SK-N-SH (cell line): ENCODE measurements at regions of chr11 and their contacts with region 1.

Region 1: DNA sequence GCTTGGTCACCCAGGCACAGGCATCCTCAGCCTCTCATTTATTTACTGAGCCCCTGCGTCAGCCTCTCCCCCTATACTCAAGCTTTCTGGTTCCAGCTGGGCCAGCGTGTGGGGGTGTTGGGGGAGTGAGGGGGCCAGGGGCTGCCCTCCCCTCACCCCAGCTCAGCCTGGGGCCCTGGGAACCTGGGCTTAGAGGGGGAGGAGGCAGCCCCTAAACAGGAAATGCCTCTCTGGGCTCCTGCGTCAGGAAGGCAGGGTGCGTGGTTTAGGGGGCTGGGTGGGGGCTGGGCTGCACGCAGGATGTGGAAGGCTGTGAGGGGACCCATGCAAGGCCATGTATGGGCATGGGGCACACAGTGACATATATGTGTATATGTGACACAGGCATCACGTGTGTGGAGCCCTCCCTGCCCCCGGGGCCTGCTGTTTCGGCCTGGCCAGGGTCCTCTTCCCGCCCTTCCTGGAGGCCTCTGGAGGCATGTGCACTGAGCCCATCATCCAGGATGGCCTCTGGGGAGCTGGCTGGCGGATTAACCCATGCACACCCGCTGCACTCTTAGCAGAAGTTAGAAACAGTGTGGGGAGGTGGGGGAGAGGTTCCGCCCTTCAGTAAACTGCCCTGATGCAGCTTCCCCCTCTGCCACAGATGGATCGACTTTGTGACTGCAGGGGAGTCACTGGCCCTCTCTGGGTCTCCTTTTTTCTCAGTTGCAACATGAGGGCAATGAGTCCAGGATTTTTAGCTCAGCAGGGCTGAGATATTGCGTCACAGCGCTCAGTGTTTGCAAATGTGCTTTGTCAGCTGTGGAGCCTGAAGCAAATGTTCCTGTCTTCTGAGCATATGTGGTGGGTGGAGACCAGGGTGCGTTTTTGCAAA is 1.1 kb upstream of the CD248 start:
- DNase-seq: peak; percentile 69
- H3K4me3 ChIP-seq: no peak overlapping the region
- H3K27ac ChIP-seq: peak overlapping the region; percentile 21 to 100; a peak in 3 of 4 replicates
- H3K4me1 ChIP-seq: peaks cover 32 to 60% of the 10 kb centered on the region in 2 experiments
- H3K27me3 ChIP-seq: no peaks in the 10 kb centered on the region
- CTCF ChIP-seq: no peak
- EP300 ChIP-seq: no peak
- RAD21 ChIP-seq: no peak

Region 2: GRCh38 chr11:66001942-66002647 is 315.9 kb before region 1 on chr11 and contains the starts of genes BANF1 and EIF1AD:
- CTCF ChIA-PET with region 1: no interaction called
- POLR2A ChIA-PET with region 1: no interaction called
- DNase-seq: peak; percentile 90
- H3K4me3 ChIP-seq: peak within 1 kb of the TSS; percentile 95 to 99
- H3K27ac ChIP-seq: peak within 1 kb of the TSS; percentile 98
- H3K4me1 ChIP-seq: peaks cover 6 to 11% of the 10 kb centered on the region in 2 experiments; a peak in 3 of 4 replicates
- H3K27me3 ChIP-seq: no peaks in the 10 kb centered on the region
- CTCF ChIP-seq: no peak
- EP300 ChIP-seq: peak; percentile 2 to 42; a peak in 1 of 4 replicates
- RAD21 ChIP-seq: no peak
- polyA plus RNA-seq, gene BANF1: 311 and 382 TPM in 2 replicates
- polyA plus RNA-seq, gene EIF1AD: 28.9 and 31.4 TPM in 2 replicates

Region 3: GRCh38 chr11:66157179-66157864 is 160.6 kb before region 1 on chr11:
- CTCF ChIA-PET with region 1: no interaction called
- POLR2A ChIA-PET with region 1: no interaction called
- DNase-seq: no peak
- H3K4me3 ChIP-seq: no peak overlapping the region
- H3K27ac ChIP-seq: 0 out of 4 replicates have a peak overlapping the region, but pooled peaks of 1 of the 2 experiments have one; percentile 1
- H3K4me1 ChIP-seq: peaks cover 6 to 11% of the 10 kb centered on the region in 2 experiments; a peak in 3 of 4 replicates
- H3K27me3 ChIP-seq: no peaks in the 10 kb centered on the region
- CTCF ChIP-seq: no peak
- EP300 ChIP-seq: no peak
- RAD21 ChIP-seq: no peak

Region 4: DNA sequence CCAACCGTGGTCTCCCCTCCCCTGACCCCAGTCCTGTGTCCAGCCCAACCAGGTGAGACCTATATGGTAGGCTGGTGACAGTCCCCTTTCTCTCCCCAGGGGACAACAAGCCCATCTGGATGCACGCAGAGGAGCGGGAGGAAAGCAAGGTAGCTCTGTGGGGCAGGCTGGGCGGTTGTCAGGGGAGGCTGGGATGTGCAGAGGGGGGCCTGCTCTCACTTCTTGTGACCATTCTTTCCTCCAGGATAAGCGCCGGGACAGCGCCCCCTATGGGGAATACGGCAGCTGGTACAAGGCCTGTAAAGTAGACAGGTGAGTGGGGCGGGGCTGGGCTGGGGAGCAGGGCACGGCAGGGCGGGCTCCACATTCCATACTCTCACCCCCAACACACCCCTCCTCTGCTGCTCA is 53.0 kb before region 1 on chr11:
- CTCF ChIA-PET with region 1: no interaction called
- POLR2A ChIA-PET with region 1: no interaction called
- DNase-seq: peak; percentile 59
- H3K4me3 ChIP-seq: no peak overlapping the region
- H3K27ac ChIP-seq: no peak overlapping the region
- H3K4me1 ChIP-seq: peaks cover 4 to 14% of the 10 kb centered on the region in 2 experiments; a peak in 2 of 4 replicates
- H3K27me3 ChIP-seq: no peaks in the 10 kb centered on the region
- CTCF ChIP-seq: peak; percentile 59
- EP300 ChIP-seq: no peak
- RAD21 ChIP-seq: no peak

Region 5: GRCh38 chr11:66288671-66289547 is 29.1 kb before region 1 on chr11 and contains the start of gene YIF1A:
- CTCF ChIA-PET with region 1: interaction called, 63 read pairs
- POLR2A ChIA-PET with region 1: interaction called, 19 read pairs
- DNase-seq: peak; percentile 98
- H3K4me3 ChIP-seq: peak within 1 kb of the TSS; percentile 88 to 90
- H3K27ac ChIP-seq: peak within 1 kb of the TSS; percentile 93 to 97
- H3K4me1 ChIP-seq: peaks cover 7 to 36% of the 10 kb centered on the region in 2 experiments; a peak in 2 of 4 replicates
- H3K27me3 ChIP-seq: no peaks in the 10 kb centered on the region
- CTCF ChIP-seq: no peak
- EP300 ChIP-seq: no peak
- RAD21 ChIP-seq: no peak
- polyA plus RNA-seq, gene YIF1A: 115 and 123 TPM in 2 replicates

Region 6: DNA sequence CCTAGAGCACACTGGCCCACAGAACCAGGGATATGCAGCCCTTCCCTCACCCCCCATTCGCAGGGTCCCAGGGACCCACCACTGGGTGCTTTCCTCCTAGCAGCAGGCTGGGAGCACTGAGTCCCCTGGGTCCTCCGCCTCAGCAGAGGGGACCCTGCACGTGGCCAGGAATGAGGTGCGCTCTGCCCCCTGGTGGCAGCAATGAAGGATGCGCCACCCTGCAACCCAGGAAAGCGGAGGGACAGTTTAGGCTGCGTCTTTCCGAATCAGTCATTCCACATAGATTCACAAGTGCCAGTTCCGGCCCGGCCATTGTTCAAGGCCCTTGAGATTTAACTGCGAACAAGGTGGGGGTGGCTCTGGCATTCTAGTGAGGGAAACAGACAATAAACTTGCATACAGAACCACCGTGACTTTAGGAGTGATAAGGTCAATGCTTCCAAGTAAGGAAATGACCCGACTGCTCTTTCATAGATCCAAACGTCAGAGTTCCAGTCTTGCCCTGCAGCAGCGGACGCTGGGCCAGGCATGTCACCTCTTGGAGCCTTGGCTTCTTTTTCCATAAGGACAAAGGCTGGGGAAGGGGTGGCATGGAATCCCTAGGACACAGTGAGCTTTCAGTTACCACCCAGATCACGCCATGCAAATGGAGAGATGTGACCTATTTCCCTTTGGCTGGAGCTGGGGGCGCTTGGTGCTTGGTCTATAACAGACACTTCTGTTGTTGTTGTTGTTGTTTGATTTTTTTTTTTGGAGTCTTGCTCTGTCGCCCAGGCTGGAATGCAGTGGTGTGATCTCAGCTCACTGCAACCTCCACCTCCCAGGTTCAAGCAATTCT is 10.6 kb after region 1 on chr11:
- CTCF ChIA-PET with region 1: interaction called, 280 read pairs
- POLR2A ChIA-PET with region 1: interaction called, 17 read pairs
- DNase-seq: peak; percentile 93
- H3K4me3 ChIP-seq: peak overlapping the region in 1 of 2 experiments; percentile 21; a peak in 1 of 4 replicates
- H3K27ac ChIP-seq: peak overlapping the region; percentile 13 to 80; a peak in 3 of 4 replicates
- H3K4me1 ChIP-seq: peaks cover 28 to 36% of the 10 kb centered on the region in 2 experiments; a peak in 3 of 4 replicates
- H3K27me3 ChIP-seq: no peaks in the 10 kb centered on the region
- CTCF ChIP-seq: peak; percentile 94
- EP300 ChIP-seq: no peak
- RAD21 ChIP-seq: peak; percentile 88